MCF 10A (cell line): ENCODE measurements at regions of chr6 and their contacts with region 1.

Region 1: DNA sequence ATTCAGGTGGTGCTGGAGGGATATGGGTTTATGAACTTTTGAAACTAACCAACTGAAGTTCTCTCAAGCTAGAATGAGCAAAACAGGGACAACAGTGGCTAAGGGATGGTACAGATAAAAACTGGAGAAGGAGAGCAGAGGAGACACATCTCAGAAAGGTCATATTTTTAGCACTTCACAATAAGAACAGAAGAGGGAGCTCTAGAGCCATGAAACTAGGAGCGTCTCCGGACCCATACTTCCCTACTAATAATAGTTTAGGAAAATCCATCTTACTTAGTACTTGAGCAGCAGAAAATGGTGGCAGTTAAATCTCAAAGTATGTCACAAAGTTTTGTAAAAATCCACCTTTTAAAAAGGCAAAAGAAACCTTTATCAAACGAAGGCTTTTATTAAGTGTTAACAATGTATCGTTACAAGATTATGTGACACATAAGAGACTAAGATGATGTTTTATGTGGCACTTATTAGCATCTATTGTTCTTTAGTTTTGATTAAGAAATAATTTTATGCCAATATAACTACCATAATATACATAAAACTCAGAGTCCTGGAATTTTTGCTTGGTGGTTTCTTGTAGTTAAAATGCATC is 278.6 kb downstream of the TBC1D32 start:
- DNase-seq: peak; percentile 72
- H3K4me3 Mint-ChIP-seq: no peak overlapping the region
- H3K27ac Mint-ChIP-seq: no peak overlapping the region
- H3K4me1 Mint-ChIP-seq: no peaks in the 10 kb centered on the region
- H3K27me3 Mint-ChIP-seq: no peaks in the 10 kb centered on the region
- CTCF ChIP-seq: peak; percentile 67

Region 2: GRCh38 chr6:121000381-121000780 is 55.3 kb before region 1 on chr6:
- CTCF ChIA-PET with region 1: no interaction called
- POLR2A ChIA-PET with region 1: no interaction called
- intact Hi-C with region 1: no loop called
- DNase-seq: no peak
- H3K4me3 Mint-ChIP-seq: no peak overlapping the region
- H3K27ac Mint-ChIP-seq: no peak overlapping the region
- H3K4me1 Mint-ChIP-seq: no peaks in the 10 kb centered on the region
- H3K27me3 Mint-ChIP-seq: no peaks in the 10 kb centered on the region
- CTCF ChIP-seq: no peak

Region 3: GRCh38 chr6:121032268-121033006 is 23.2 kb before region 1 on chr6:
- CTCF ChIA-PET with region 1: no interaction called
- POLR2A ChIA-PET with region 1: no interaction called
- intact Hi-C with region 1: no loop called
- DNase-seq: no peak
- H3K4me3 Mint-ChIP-seq: no peak overlapping the region
- H3K27ac Mint-ChIP-seq: no peak overlapping the region
- H3K4me1 Mint-ChIP-seq: no peaks in the 10 kb centered on the region
- H3K27me3 Mint-ChIP-seq: no peaks in the 10 kb centered on the region
- CTCF ChIP-seq: no peak

Region 4: GRCh38 chr6:121086876-121087275 is 31.2 kb after region 1 on chr6:
- CTCF ChIA-PET with region 1: no interaction called
- POLR2A ChIA-PET with region 1: no interaction called
- intact Hi-C with region 1: no loop called
- DNase-seq: no peak
- H3K4me3 Mint-ChIP-seq: no peak overlapping the region
- H3K27ac Mint-ChIP-seq: no peak overlapping the region
- H3K4me1 Mint-ChIP-seq: no peaks in the 10 kb centered on the region
- H3K27me3 Mint-ChIP-seq: no peaks in the 10 kb centered on the region
- CTCF ChIP-seq: no peak

Region 5: DNA sequence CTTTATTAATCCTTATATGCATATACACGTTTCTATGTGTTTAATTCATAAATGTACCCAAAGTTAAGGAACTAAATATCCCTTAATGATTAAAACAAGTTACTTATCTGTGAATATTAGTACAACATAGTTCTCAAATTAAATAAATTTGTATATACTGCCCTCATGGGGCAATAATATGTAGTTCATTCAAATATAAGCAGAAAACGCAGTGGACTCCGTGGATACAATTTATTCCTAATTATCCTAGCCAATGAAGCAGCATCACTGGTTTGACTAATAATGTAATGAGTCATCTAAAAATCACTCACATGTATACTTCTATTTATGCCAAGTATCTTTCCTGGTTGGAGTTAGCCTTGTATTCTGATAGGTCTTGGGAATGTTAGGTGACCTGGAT is 167.0 kb after region 1 on chr6:
- CTCF ChIA-PET with region 1: interaction called, 9 read pairs
- POLR2A ChIA-PET with region 1: interaction called, 3 read pairs
- intact Hi-C with region 1: loop called (anchors 1 kb)
- DNase-seq: peak; percentile 48
- H3K4me3 Mint-ChIP-seq: no peak overlapping the region
- H3K27ac Mint-ChIP-seq: no peak overlapping the region
- H3K4me1 Mint-ChIP-seq: no peaks in the 10 kb centered on the region
- H3K27me3 Mint-ChIP-seq: no peaks in the 10 kb centered on the region
- CTCF ChIP-seq: peak; percentile 36

Region 6: GRCh38 chr6:121851056-121851455 is 795.4 kb after region 1 on chr6:
- CTCF ChIA-PET with region 1: no interaction called
- POLR2A ChIA-PET with region 1: no interaction called
- intact Hi-C with region 1: no loop called
- DNase-seq: no peak
- H3K4me3 Mint-ChIP-seq: no peak overlapping the region
- H3K27ac Mint-ChIP-seq: no peak overlapping the region
- H3K4me1 Mint-ChIP-seq: no peaks in the 10 kb centered on the region
- H3K27me3 Mint-ChIP-seq: no peaks in the 10 kb centered on the region
- CTCF ChIP-seq: no peak